ENCODE measurements at regions of chr12 and their contacts with region 1.

Region 1: DNA sequence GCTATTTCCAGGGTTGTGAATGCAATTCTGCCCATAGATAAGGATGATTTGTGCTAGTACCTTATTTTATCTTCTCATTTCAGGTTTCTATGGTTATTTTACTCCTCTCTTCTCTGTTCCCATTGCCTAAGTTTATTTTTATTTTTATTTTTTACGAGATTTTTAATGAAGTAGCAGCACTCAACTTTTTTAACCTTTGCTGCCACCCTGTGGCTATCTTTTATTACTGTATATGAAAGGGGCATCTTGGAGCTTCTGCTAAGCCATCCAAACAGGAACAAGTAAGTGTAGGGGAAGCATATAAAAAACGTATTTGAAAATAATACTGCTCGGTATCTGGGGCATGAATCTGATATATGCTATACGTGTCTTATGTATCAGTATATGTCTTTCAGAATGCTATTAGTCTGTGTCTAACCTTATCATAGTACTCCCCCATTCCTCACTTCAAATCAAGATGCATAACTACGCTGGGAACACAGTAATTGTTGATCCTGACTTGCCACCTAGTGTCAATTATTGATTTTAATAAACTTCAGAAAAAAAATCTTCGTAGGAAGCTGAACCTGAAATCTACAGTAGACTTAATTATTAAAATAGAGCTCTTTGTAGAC is 60.3 kb downstream of the KLRG1 start:
- DNase-seq: peak; percentile 66 to 89 (median 82)
- H3K4me3 ChIP-seq: no peak overlapping the region
- H3K27ac ChIP-seq: no peak overlapping the region
- H3K4me1 ChIP-seq: peaks cover 0 to 2% (median 0%) of the 10 kb centered on the region in 4 experiments
- H3K27me3 ChIP-seq: no peaks in the 10 kb centered on the region

Region 2: GRCh38 chr12:8949342-8950220 is 100.0 kb before region 1 on chr12 and contains the start of gene M6PR:
- CTCF ChIA-PET with region 1: interaction called, 39 read pairs
- POLR2A ChIA-PET with region 1: interaction called, 3 read pairs
- DNase-seq: peak; percentile 95 to 96 (median 96)
- H3K4me3 ChIP-seq: peak within 1 kb of the TSS; percentile 66 to 98 (median 94)
- H3K27ac ChIP-seq: peak within 1 kb of the TSS; percentile 98 to 99
- H3K4me1 ChIP-seq: peaks cover 16 to 40% (median 28%) of the 10 kb centered on the region in 4 experiments
- H3K27me3 ChIP-seq: no peaks in the 10 kb centered on the region

Region 3: GRCh38 chr12:9064201-9064814 is 14.7 kb after region 1 on chr12:
- CTCF ChIA-PET with region 1: interaction called, 16 read pairs
- POLR2A ChIA-PET with region 1: no interaction called
- DNase-seq: peak; percentile 82 to 91 (median 89)
- H3K4me3 ChIP-seq: peak overlapping the region; percentile 66 to 86 (median 74)
- H3K27ac ChIP-seq: peak overlapping the region in 1 of 2 experiments; percentile 44
- H3K4me1 ChIP-seq: peaks cover 2 to 16% (median 6%) of the 10 kb centered on the region in 4 experiments
- H3K27me3 ChIP-seq: no peaks in the 10 kb centered on the region